Activated naive CD4-positive, alpha-beta T cell treated with anti-CD3 and anti-CD28 coated beads for 36 hours (primary cell): ENCODE measurements at regions of chr3 and their contacts with region 1.

Region 1: DNA sequence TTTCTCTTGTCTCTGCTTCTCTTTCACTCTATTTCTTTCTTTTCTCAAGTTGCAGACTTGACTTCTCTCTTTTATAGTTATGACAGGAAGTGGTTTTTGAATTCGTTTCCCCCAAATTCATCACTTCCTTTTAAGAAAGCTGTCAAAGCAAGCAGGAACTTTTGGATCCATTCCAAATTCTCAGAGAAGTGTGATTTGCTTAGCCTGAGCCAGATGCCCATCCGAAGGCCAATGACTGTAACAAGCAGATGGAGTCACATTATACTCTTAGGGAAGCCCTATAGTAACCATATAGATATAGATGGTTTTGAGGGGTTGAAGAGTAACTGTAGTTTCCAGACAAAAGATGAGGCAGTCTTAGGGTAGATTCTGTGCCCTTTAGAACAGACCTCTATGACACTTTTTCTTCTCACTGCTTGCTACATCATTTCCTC is 592.0 kb upstream of the KCNMB2 start:
- DNase-seq: peak; percentile 24
- H3K4me3 Mint-ChIP-seq: no peak overlapping the region
- H3K27ac Mint-ChIP-seq: peak overlapping the region; percentile 85
- H3K4me1 Mint-ChIP-seq: peaks cover 36% of the 10 kb centered on the region
- H3K27me3 Mint-ChIP-seq: no peaks in the 10 kb centered on the region

Region 2: GRCh38 chr3:177883957-177884356 is 60.3 kb before region 1 on chr3:
- CTCF ChIA-PET with region 1: no interaction called
- intact Hi-C with region 1: loop called (anchors 5 kb)
- DNase-seq: no peak
- H3K4me3 Mint-ChIP-seq: no peak overlapping the region
- H3K27ac Mint-ChIP-seq: no peak overlapping the region
- H3K4me1 Mint-ChIP-seq: peaks cover 18% of the 10 kb centered on the region
- H3K27me3 Mint-ChIP-seq: no peaks in the 10 kb centered on the region

Region 3: DNA sequence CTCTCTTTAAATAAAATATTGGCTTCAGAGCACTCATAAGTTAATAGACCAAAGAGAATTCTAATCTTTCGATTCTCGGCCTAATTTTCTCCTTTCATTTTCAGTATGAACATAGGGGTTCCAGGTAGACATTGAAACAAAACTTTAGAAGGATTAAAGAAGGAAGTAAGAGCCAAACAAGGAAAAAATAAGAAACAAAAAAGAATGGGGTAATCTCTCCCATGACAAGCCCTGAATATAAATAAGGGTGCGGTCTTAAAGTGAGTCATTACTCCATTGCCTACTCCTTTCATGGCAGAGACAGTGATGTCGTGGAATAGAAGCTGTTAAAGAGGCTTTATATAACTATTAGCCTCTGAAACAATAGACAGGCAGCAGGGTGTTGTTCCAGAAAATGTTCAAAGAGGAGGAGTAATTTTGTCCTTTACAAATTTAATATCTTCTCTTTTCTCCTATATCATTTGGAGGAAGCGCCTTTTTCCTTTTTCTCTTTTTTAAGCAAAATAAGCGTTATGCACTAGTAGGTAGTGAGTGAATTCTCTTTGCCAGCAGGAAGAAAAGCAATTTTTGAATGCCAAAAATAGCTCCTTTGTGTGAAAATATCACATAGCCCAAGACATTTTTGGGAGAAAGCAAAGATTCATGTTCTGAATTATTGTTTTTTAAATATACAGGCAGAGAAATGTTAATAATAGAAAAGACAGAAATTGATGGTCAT is 15.9 kb before region 1 on chr3:
- CTCF ChIA-PET with region 1: no interaction called
- intact Hi-C with region 1: loop called (anchors 1 kb)
- DNase-seq: no peak
- H3K4me3 Mint-ChIP-seq: no peak overlapping the region
- H3K27ac Mint-ChIP-seq: no peak overlapping the region
- H3K4me1 Mint-ChIP-seq: peaks cover 21% of the 10 kb centered on the region
- H3K27me3 Mint-ChIP-seq: no peaks in the 10 kb centered on the region

Region 4: DNA sequence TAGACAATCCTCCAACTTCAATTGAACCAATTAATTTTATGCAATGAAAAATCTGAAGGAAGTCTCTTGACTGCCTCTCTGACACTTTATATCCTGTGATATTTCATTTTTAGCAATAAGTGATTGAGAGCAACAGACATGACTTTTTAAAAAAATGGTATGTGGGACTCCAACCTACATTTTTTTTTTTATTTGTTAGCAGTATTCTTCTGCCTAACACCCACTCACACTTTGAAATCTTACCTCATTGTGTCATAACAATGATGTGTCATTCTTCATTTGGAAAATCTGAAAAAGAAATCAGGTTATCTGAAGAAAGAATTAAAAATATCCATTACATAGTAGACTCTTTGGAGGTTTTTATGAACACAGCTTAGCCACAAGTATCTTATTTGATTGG is 50.7 kb after region 1 on chr3:
- CTCF ChIA-PET with region 1: no interaction called
- intact Hi-C with region 1: loop called (anchors 2 kb)
- DNase-seq: no peak
- H3K4me3 Mint-ChIP-seq: no peak overlapping the region
- H3K27ac Mint-ChIP-seq: peak overlapping the region; percentile 67
- H3K4me1 Mint-ChIP-seq: peaks cover 30% of the 10 kb centered on the region
- H3K27me3 Mint-ChIP-seq: no peaks in the 10 kb centered on the region

Region 5: DNA sequence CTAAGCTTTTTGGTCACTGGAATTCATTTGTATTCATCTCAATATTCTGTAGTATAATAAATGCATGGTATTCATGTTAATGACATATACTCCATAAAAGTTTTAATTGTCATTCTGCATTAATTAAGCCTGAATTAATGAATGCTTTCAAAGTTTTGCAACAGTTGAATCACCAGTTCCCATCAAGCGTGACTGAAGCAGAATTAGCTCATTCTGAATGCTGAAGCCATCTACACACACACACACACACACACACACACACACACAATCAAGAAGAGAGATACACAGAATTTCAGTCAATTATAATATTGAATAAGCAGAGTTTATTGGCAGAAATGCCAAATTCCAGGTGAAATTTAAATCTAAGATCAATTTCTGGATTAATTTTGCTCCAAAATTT is 339.9 kb after region 1 on chr3:
- CTCF ChIA-PET with region 1: no interaction called
- intact Hi-C with region 1: no loop called
- DNase-seq: no peak
- H3K4me3 Mint-ChIP-seq: no peak overlapping the region
- H3K27ac Mint-ChIP-seq: no peak overlapping the region
- H3K4me1 Mint-ChIP-seq: no peaks in the 10 kb centered on the region
- H3K27me3 Mint-ChIP-seq: no peaks in the 10 kb centered on the region